ENCODE measurements at regions of chr5 and their contacts with region 1.

Region 1: DNA sequence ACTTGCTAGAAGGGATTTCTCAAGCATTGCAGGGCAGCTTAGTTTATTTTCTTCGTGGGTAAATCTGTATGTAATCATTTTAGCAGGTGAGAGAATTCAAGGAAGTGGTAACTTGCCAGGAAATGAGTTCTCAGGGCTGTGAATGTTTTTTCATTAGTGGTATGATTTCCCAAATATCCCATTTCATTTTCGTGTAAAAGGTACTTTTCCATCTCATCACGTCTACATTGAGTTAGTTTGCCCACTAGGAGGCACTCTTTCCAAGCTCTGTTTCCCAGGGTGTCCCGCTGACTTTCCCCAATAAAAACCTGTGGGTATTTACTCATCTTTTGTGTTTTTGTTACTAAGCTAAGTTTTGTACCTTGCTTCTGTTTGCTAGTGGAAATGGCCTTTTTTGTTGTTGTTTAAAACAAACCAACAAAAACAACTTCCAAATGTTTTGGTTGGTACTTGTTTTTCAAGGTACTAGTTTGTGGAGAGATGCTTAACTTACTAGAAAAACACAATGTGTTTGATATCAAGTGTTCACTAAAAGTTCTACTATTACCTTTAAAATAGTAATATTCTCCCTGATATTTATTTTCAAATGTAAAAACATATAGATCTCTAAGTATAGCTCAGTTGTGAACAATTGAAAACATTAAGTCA is 373.6 kb downstream of the ADGRV1 start:
- DNase-seq: peak; percentile 44
- ATAC-seq: peak; percentile 67
- H3K4me3 ChIP-seq: no peak overlapping the region
- H3K27ac ChIP-seq: no peak overlapping the region
- H3K4me1 ChIP-seq: no peaks in the 10 kb centered on the region
- H3K27me3 ChIP-seq: no peaks in the 10 kb centered on the region
- CTCF ChIP-seq: peak; percentile 69 to 77 (median 74); a peak in 5 of 6 replicates
- POLR2A ChIP-seq: no peak
- RAD21 ChIP-seq: peak; percentile 84

Region 2: GRCh38 chr5:90182734-90183133 is 749.4 kb before region 1 on chr5:
- CTCF ChIA-PET with region 1: no interaction called
- POLR2A ChIA-PET with region 1: no interaction called
- RAD21 ChIA-PET with region 1: no interaction called
- intact Hi-C with region 1: no loop called
- DNase-seq: no peak
- ATAC-seq: no peak
- H3K4me3 ChIP-seq: no peak overlapping the region
- H3K27ac ChIP-seq: no peak overlapping the region
- H3K4me1 ChIP-seq: no peaks in the 10 kb centered on the region
- H3K27me3 ChIP-seq: no peaks in the 10 kb centered on the region
- CTCF ChIP-seq: no peak
- POLR2A ChIP-seq: no peak
- RAD21 ChIP-seq: no peak

Region 3: DNA sequence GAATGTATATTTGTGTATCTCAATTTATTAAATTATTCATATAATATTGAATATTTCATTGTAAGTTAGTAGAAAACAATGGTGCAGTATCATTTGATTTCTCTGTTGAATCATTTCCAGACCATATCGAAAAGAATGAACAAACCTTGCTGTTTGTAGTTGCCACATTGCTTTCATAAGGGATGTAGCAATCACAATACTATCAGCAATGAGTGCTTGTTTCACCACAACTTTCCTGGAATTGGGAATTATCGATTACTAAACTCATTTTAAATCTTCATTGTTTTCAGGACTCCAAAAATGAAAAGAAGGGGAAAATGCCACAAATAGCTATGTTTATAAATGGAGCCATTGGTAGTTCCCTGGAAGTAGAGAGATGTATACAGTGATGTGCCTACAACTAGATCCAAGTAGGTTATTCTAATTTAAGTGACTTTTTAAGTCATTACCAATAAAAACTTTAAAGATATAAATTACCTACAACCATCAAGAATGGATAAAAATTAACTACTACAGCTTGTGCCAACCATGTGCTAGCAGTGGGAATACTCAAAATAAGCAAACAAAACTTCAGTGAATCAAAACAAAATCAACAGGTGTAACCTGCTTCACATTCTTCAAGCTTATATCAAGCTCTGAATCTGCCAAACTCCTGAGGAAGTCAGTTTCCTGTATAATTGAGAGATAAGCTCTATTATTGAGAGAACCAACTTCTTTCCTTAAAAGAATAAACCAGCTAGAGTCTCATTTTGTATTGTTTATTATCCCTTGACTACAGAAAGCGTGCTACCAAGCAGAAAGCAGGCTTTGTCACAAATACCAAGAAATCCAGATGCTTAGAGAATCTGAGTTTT is 15.0 kb before region 1 on chr5:
- CTCF ChIA-PET with region 1: interaction called, 11 read pairs
- POLR2A ChIA-PET with region 1: interaction called, 3 read pairs
- RAD21 ChIA-PET with region 1: no interaction called
- intact Hi-C with region 1: no loop called
- DNase-seq: no peak
- ATAC-seq: no peak
- H3K4me3 ChIP-seq: no peak overlapping the region
- H3K27ac ChIP-seq: no peak overlapping the region
- H3K4me1 ChIP-seq: no peaks in the 10 kb centered on the region
- H3K27me3 ChIP-seq: no peaks in the 10 kb centered on the region
- CTCF ChIP-seq: no peak
- POLR2A ChIP-seq: no peak
- RAD21 ChIP-seq: no peak

Region 4: DNA sequence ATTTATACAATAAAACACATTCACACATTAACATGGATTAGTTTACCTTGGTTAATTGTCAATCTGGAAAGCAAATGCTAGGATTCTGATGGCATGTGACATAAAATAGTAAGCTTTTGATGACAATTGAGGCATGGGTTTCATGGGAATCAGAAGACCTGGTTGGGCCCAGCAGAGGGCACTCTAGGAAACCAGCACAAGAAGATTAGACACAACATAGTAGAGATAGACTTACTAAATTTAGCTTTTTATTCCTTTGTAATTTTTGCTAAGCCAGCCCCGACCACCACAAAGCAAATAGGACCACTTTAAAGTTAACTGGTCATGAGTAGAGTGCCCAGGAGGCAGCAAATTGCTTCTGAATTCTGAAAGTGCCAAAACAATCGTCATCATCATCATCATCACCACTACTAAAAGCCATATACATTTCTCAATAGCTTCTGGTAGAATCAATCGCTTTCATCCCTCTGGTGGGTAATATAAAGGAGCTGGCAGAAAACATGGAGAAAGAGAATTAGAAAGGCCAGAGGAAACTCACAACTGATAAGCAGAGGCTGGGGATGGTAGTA is 287.7 kb after region 1 on chr5:
- CTCF ChIA-PET with region 1: interaction called, 10 read pairs
- POLR2A ChIA-PET with region 1: no interaction called
- RAD21 ChIA-PET with region 1: no interaction called
- intact Hi-C with region 1: loop called (anchors 5 kb)
- DNase-seq: peak; percentile 26
- ATAC-seq: peak; percentile 82
- H3K4me3 ChIP-seq: no peak overlapping the region
- H3K27ac ChIP-seq: no peak overlapping the region
- H3K4me1 ChIP-seq: no peaks in the 10 kb centered on the region
- H3K27me3 ChIP-seq: no peaks in the 10 kb centered on the region
- CTCF ChIP-seq: peak; percentile 50 to 64 (median 60); a peak in 5 of 6 replicates
- POLR2A ChIP-seq: no peak
- RAD21 ChIP-seq: peak; percentile 49

Measured in HCT116 (cell line).